Activated CD4-positive, alpha-beta T cell treated with anti-CD3 and anti-CD28 coated beads for 36 hours (primary cell): ENCODE measurements at regions of chr17 and their contacts with region 1.

Region 1: DNA sequence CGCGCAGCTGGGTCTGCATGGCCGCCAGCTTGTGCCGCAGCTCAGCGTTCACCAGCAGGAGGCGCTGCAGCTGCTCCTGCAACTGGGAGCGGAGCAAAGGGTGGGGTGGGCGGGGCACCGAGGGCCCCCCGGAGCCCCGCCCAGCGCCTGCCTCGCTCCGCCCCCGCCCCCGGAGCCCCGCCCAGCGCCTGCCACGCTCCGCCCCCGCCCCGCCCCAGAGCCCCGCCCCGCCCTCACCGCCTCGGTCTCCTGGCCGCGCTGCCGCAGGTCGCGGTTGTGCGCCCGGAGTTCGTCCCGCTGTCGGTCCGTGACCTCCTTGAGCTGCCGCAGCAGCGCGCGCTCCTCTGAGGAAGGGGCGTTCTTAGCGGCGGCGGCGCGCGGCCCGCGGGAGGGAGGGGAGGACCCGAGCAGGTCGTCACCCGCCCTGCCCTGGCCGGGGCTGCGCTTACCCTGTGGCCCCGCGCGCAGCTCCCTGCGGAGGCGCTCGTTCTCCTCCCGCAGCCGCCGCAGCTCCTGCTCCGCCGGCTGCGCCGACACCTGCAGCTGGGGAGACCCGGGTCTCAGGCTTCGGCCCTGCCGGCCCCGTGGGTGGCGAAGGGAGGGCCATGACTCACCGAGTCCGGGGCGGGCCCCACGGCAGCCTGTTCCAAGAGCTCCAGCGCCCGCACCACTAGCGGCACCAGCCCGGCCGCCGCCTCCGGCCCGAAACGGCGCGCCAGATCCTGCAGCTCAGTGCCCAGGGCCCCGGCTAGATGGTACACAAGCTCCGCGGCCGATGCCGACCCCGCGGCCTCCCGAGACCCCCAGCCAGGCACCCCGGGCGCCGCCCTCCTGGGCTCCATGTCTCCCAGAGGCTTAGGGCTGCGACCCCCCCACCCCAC is 463 bp downstream of the RILP start:
- DNase-seq: peak; percentile 97
- ATAC-seq: peak; percentile 74
- H3K4me3 Mint-ChIP-seq: peak overlapping the region; percentile 43
- H3K27ac Mint-ChIP-seq: no peak overlapping the region
- H3K4me1 Mint-ChIP-seq: peaks cover 25% of the 10 kb centered on the region
- H3K27me3 Mint-ChIP-seq: no peaks in the 10 kb centered on the region

Region 2: DNA sequence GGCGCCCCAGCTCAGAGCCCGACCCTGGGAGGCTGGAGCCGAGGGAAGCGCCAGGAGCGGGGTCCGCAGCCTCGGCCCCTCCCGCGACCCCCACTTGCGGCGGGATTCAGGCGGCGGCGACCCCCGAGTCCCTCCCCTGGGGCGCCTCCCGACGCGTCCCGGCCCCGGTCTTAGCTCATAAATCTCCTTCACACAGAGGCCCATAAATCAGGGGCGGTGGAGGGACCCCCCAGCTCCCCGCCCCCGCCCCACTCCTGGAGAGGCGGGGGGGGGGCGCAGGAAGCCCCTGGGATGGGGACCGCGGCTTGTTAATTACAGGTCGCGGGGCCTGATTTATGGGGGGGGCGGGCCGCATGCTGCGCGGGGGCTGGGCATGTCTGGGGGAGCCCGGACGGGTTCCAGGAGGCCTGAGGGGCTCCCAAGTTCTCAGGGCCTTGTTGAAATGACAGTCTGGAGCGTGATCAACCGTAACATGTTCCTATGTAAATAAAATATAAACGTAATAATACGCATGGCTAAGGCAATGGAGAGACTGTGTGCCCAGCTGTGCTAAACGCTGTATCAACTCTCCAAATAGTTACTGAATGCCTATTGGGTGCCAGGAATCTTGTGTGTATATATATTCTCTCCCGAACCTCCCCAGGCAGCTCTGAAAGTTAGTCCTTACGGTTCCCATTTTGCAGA is 389.0 kb before region 1 on chr17:
- CTCF ChIA-PET with region 1: no interaction called
- POLR2A ChIA-PET with region 1: no interaction called
- intact Hi-C with region 1: loop called in 1 of 2 experiments (anchors 1 kb)
- DNase-seq: no peak
- ATAC-seq: no peak
- H3K4me3 Mint-ChIP-seq: no peak overlapping the region
- H3K27ac Mint-ChIP-seq: no peak overlapping the region
- H3K4me1 Mint-ChIP-seq: peaks cover 11% of the 10 kb centered on the region
- H3K27me3 Mint-ChIP-seq: peaks cover 24% of the 10 kb centered on the region

Region 3: GRCh38 chr17:1488030-1488863 is 161.0 kb before region 1 on chr17:
- CTCF ChIA-PET with region 1: interaction called, 3 read pairs
- POLR2A ChIA-PET with region 1: no interaction called
- intact Hi-C with region 1: loop called in 1 of 2 experiments (anchors 2 kb)
- DNase-seq: peak; percentile 77
- ATAC-seq: peak; percentile 10
- H3K4me3 Mint-ChIP-seq: peak overlapping the region; percentile 71
- H3K27ac Mint-ChIP-seq: no peak overlapping the region
- H3K4me1 Mint-ChIP-seq: peaks cover 42% of the 10 kb centered on the region
- H3K27me3 Mint-ChIP-seq: no peaks in the 10 kb centered on the region

Region 4: DNA sequence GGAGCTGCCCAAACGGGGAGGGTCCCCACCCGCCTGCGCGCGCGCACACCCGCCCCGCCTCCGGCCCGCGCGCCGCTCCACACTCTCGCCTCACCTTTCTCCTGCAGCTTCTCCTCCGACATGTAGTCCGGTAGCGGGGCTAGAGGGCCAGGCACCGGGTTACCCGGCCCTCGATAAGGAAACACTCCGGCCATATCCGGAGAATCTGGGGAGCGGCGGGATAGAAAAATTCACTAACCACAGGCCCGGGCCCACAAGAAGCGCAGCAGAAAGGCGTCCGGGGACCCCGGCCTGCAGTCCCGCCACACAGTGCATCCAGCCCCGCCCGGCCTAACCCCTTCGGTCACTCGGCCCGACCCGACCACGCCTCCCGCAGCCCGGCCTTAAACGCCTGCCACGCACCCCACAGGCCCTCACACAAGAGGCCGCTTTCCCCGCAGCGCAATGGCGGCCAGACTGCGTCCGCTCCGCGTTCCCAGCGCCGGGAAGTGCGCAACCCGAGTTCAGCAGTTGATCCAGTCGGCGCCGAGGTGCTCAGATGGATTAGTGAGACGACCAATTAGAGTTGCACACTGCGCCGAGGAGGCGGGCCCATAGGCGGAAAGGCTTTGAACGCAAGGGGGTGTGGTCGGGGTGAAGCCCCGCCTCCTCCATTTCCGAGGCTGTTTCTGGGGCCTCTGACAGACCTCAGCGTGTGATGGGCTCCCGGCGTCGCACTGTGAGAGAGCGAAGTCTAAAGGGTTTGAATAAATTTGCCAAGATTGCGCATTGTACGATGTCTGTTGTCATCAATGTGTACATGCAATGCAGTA is 35.4 kb after region 1 on chr17 and contains the start of gene PRPF8:
- CTCF ChIA-PET with region 1: interaction called, 8 read pairs
- POLR2A ChIA-PET with region 1: no interaction called
- intact Hi-C with region 1: loop called (anchors 1 to 2 kb)
- DNase-seq: peak; percentile 99
- ATAC-seq: peak; percentile 100
- H3K4me3 Mint-ChIP-seq: peak within 1 kb of the TSS; percentile 98
- H3K27ac Mint-ChIP-seq: peak within 1 kb of the TSS; percentile 93
- H3K4me1 Mint-ChIP-seq: peaks cover 34% of the 10 kb centered on the region
- H3K27me3 Mint-ChIP-seq: no peaks in the 10 kb centered on the region
- total RNA-seq, gene PRPF8: 391 to 425 TPM

Region 5: DNA sequence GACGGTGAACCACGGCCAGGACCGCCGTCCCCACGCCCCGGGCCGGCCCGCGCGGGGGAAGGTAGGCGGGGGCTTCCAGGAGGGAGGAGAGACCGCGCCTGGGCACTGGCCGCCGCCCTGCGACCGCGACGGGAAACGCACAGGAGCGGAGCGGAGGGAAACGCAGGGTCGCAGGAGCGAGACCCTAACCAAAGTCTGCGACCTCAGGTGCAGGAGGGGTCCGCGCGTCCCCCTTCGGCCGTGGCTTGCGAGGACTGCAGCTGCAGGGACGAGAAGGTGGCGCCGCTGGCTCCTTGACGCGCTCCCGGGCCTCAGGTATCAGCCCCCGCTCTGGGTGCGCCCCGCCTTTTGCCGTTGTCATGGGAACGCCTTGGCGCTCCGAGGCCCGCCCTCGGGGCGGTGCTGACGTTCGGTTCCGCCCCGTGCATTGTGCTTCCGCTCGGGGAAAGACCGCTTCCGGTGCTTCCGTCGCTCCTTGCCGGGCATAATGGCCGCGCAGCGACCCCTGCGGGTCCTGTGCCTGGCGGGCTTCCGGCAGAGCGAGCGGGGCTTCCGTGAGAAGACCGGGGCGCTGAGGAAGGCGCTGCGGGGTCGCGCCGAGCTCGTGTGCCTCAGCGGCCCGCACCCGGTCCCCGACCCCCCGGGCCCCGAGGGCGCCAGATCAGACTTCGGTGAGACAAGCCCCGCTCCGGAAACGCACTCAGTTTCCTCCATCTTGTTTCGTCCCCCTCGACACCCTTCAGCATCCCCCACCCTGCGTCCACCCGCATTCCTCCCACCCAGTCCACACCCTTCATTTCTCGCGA is 392.6 kb after region 1 on chr17 and contains the start of gene OVCA2:
- CTCF ChIA-PET with region 1: no interaction called
- POLR2A ChIA-PET with region 1: no interaction called
- intact Hi-C with region 1: loop called in 1 of 2 experiments (anchors 2 kb)
- DNase-seq: peak; percentile 99
- ATAC-seq: peak; percentile 92
- H3K4me3 Mint-ChIP-seq: peak within 1 kb of the TSS; percentile 95
- H3K27ac Mint-ChIP-seq: peak within 1 kb of the TSS; percentile 95
- H3K4me1 Mint-ChIP-seq: peaks cover 23% of the 10 kb centered on the region
- H3K27me3 Mint-ChIP-seq: no peaks in the 10 kb centered on the region
- total RNA-seq, gene OVCA2: 31.4 to 38.6 TPM

Region 6: GRCh38 chr17:2511462-2512369 is 862.5 kb after region 1 on chr17 and contains the start of gene METTL16:
- CTCF ChIA-PET with region 1: no interaction called
- POLR2A ChIA-PET with region 1: no interaction called
- intact Hi-C with region 1: loop called in 1 of 2 experiments (anchors 5 kb)
- DNase-seq: peak; percentile 100
- ATAC-seq: peak; percentile 99
- H3K4me3 Mint-ChIP-seq: no peak within 1 kb of the TSS
- H3K27ac Mint-ChIP-seq: no peak within 1 kb of the TSS
- H3K4me1 Mint-ChIP-seq: peaks cover 17% of the 10 kb centered on the region
- H3K27me3 Mint-ChIP-seq: no peaks in the 10 kb centered on the region
- total RNA-seq, gene METTL16: 50.1 to 61.6 TPM